Lower leg skin (tissue), 4 donors: ENCODE measurements at regions of chr3 and their contacts with region 1.

Region 1: GRCh38 chr3:128572644-128573105 is 77.9 kb downstream of the RPN1 start:
- DNase-seq: no peak
- H3K4me3 ChIP-seq: no peak overlapping the region
- CTCF ChIP-seq: no peak
- POLR2A ChIP-seq: no peak

Region 2: GRCh38 chr3:128879125-128879969 is 306.7 kb after region 1 on chr3 and contains the start of gene ACAD9:
- intact Hi-C with region 1: no loop called
- DNase-seq: peak; percentile 97 to 99
- H3K4me3 ChIP-seq: peak within 1 kb of the TSS; percentile 75
- CTCF ChIP-seq: no peak
- POLR2A ChIP-seq: peak in 1 of 2 donors; percentile 55
- total RNA-seq, gene ACAD9: 101 to 180 (median 130) TPM

Region 3: GRCh38 chr3:128922804-128923459 is 350.3 kb after region 1 on chr3:
- intact Hi-C with region 1: no loop called
- DNase-seq: peak in 1 of 2 donors; percentile 68
- H3K4me3 ChIP-seq: no peak overlapping the region
- CTCF ChIP-seq: no peak
- POLR2A ChIP-seq: no peak

Region 4: DNA sequence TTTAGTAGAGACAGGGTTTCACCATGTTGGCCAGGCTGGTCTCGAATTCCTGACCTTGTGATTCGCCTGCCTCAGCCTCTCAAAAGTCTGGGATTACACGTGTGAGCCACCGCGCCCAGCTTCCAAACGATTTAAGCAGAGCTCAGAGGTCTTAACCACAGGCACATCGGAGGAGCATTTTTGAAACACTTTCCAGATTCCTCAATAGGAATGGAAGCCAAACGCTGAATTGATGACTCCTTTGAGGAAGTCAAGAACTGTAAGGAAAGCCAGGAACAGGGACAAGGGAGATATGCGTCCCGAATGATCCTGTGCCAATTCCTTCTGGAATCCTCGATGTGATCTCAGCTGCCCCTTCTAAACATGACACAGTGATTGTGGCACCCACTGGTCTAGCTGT is 1441.9 kb after region 1 on chr3:
- intact Hi-C with region 1: loop called (anchors 5 kb)
- DNase-seq: no peak
- H3K4me3 ChIP-seq: no peak overlapping the region
- CTCF ChIP-seq: no peak
- POLR2A ChIP-seq: no peak